ENCODE measurements at regions of chr10 and their contacts with region 1.

Region 1: GRCh38 chr10:17257466-17258321 is 29.7 kb downstream of the VIM start:
- DNase-seq: peak; percentile 55
- H3K4me3 ChIP-seq: peak overlapping the region in 1 of 2 experiments; percentile 28; a peak in 1 of 4 replicates
- H3K27ac ChIP-seq: peak overlapping the region; percentile 4 to 76; a peak in 3 of 4 replicates
- H3K4me1 ChIP-seq: 0 out of 4 replicates have a peak, but pooled peaks cover 0 to 8% of the 10 kb centered on the region in 2 experiments
- H3K27me3 ChIP-seq: no peaks in the 10 kb centered on the region
- CTCF ChIP-seq: peak; percentile 89
- EP300 ChIP-seq: no peak
- RAD21 ChIP-seq: peak; percentile 96

Region 2: GRCh38 chr10:16828114-16828568 is 429.6 kb before region 1 on chr10:
- CTCF ChIA-PET with region 1: interaction called, 15 read pairs
- POLR2A ChIA-PET with region 1: no interaction called
- DNase-seq: peak; percentile 27
- H3K4me3 ChIP-seq: peak overlapping the region; percentile 23 to 24; a peak in 3 of 4 replicates
- H3K27ac ChIP-seq: peak overlapping the region in 1 of 2 experiments; percentile 95; a peak in 3 of 4 replicates
- H3K4me1 ChIP-seq: peaks cover 0 to 25% of the 10 kb centered on the region in 2 experiments; a peak in 2 of 4 replicates
- H3K27me3 ChIP-seq: no peaks in the 10 kb centered on the region
- CTCF ChIP-seq: peak; percentile 61
- EP300 ChIP-seq: no peak
- RAD21 ChIP-seq: peak; percentile 84

Region 3: GRCh38 chr10:16847644-16848043 is 410.1 kb before region 1 on chr10:
- CTCF ChIA-PET with region 1: interaction called, 34 read pairs
- POLR2A ChIA-PET with region 1: no interaction called
- DNase-seq: no peak
- H3K4me3 ChIP-seq: no peak overlapping the region
- H3K27ac ChIP-seq: peak overlapping the region; percentile 62 to 87; a peak in 3 of 4 replicates
- H3K4me1 ChIP-seq: peaks cover 0 to 25% of the 10 kb centered on the region in 2 experiments; a peak in 3 of 4 replicates
- H3K27me3 ChIP-seq: no peaks in the 10 kb centered on the region
- CTCF ChIP-seq: no peak
- EP300 ChIP-seq: peak; percentile 50 to 91; a peak in 2 of 4 replicates
- RAD21 ChIP-seq: no peak

Region 4: GRCh38 chr10:16853201-16853600 is 404.5 kb before region 1 on chr10:
- CTCF ChIA-PET with region 1: interaction called, 34 read pairs
- POLR2A ChIA-PET with region 1: no interaction called
- DNase-seq: peak; percentile 38
- H3K4me3 ChIP-seq: no peak overlapping the region
- H3K27ac ChIP-seq: peak overlapping the region; percentile 50 to 58
- H3K4me1 ChIP-seq: peaks cover 22 to 38% of the 10 kb centered on the region in 2 experiments
- H3K27me3 ChIP-seq: no peaks in the 10 kb centered on the region
- CTCF ChIP-seq: peak; percentile 58
- EP300 ChIP-seq: no peak
- RAD21 ChIP-seq: peak; percentile 93

Region 5: GRCh38 chr10:17273403-17273802 is 15.7 kb after region 1 on chr10:
- CTCF ChIA-PET with region 1: interaction called, 12 read pairs
- POLR2A ChIA-PET with region 1: no interaction called
- DNase-seq: no peak
- H3K4me3 ChIP-seq: no peak overlapping the region
- H3K27ac ChIP-seq: no peak overlapping the region
- H3K4me1 ChIP-seq: no peaks in the 10 kb centered on the region; a peak in 1 of 4 replicates
- H3K27me3 ChIP-seq: no peaks in the 10 kb centered on the region
- CTCF ChIP-seq: no peak
- EP300 ChIP-seq: no peak
- RAD21 ChIP-seq: no peak

Region 6: GRCh38 chr10:17435953-17436352 is 178.3 kb after region 1 on chr10:
- CTCF ChIA-PET with region 1: no interaction called
- POLR2A ChIA-PET with region 1: no interaction called
- DNase-seq: no peak
- H3K4me3 ChIP-seq: no peak overlapping the region
- H3K27ac ChIP-seq: no peak overlapping the region
- H3K4me1 ChIP-seq: no peaks in the 10 kb centered on the region
- H3K27me3 ChIP-seq: no peaks in the 10 kb centered on the region; the same call in 1 of the 2 replicates
- CTCF ChIP-seq: no peak
- EP300 ChIP-seq: no peak
- RAD21 ChIP-seq: no peak

Measured in SK-N-SH (cell line).